CD8-positive, alpha-beta memory T cell (primary cell): ENCODE measurements at regions of chr7 and their contacts with region 1.

Region 1: GRCh38 chr7:139602143-139602722 is 78.7 kb downstream of the CLEC2L start:
- DNase-seq: peak in 1 of 5 donors; percentile 28
- H3K4me3 ChIP-seq: no peak overlapping the region
- H3K4me3 Mint-ChIP-seq: no peak overlapping the region
- H3K27ac ChIP-seq: no peak overlapping the region
- H3K27ac Mint-ChIP-seq: no peak overlapping the region
- H3K4me1 ChIP-seq: no peaks in the 10 kb centered on the region
- H3K4me1 Mint-ChIP-seq: no peaks in the 10 kb centered on the region
- H3K27me3 ChIP-seq: no peaks in the 10 kb centered on the region
- H3K27me3 Mint-ChIP-seq: peaks cover 0 to 2% of the 10 kb centered on the region in 2 donors

Region 2: GRCh38 chr7:139618482-139619366 is 16.5 kb after region 1 on chr7:
- CTCF ChIA-PET with region 1: interaction called, 12 read pairs
- POLR2A ChIA-PET with region 1: no interaction called
- DNase-seq: peak in 1 of 5 donors; percentile 43
- H3K4me3 ChIP-seq: no peak overlapping the region
- H3K4me3 Mint-ChIP-seq: no peak overlapping the region
- H3K27ac ChIP-seq: no peak overlapping the region
- H3K27ac Mint-ChIP-seq: peak overlapping the region in 2 of 8 donors; percentile 38 to 51
- H3K4me1 ChIP-seq: no peaks in the 10 kb centered on the region
- H3K4me1 Mint-ChIP-seq: peaks cover 0 to 2% (median 0%) of the 10 kb centered on the region in 3 donors
- H3K27me3 ChIP-seq: no peaks in the 10 kb centered on the region
- H3K27me3 Mint-ChIP-seq: no peaks in the 10 kb centered on the region

Region 3: GRCh38 chr7:139753081-139753692 is 151.0 kb after region 1 on chr7:
- CTCF ChIA-PET with region 1: no interaction called
- POLR2A ChIA-PET with region 1: no interaction called
- DNase-seq: no peak
- H3K4me3 ChIP-seq: no peak overlapping the region
- H3K4me3 Mint-ChIP-seq: no peak overlapping the region
- H3K27ac ChIP-seq: no peak overlapping the region
- H3K27ac Mint-ChIP-seq: no peak overlapping the region
- H3K4me1 ChIP-seq: peaks cover 20% of the 10 kb centered on the region
- H3K4me1 Mint-ChIP-seq: peaks cover 28 to 46% (median 44%) of the 10 kb centered on the region in 3 donors
- H3K27me3 ChIP-seq: no peaks in the 10 kb centered on the region
- H3K27me3 Mint-ChIP-seq: no peaks in the 10 kb centered on the region

Region 4: GRCh38 chr7:139767561-139767982 is 165.3 kb after region 1 on chr7:
- CTCF ChIA-PET with region 1: no interaction called
- POLR2A ChIA-PET with region 1: no interaction called
- DNase-seq: peak in 2 of 5 donors; percentile 36 to 54
- H3K4me3 ChIP-seq: peak overlapping the region; percentile 16
- H3K4me3 Mint-ChIP-seq: peak overlapping the region; percentile 3 to 69 (median 40)
- H3K27ac ChIP-seq: no peak overlapping the region
- H3K27ac Mint-ChIP-seq: peak overlapping the region; percentile 44 to 99 (median 85)
- H3K4me1 ChIP-seq: peaks cover 40% of the 10 kb centered on the region
- H3K4me1 Mint-ChIP-seq: peaks cover 53 to 83% (median 60%) of the 10 kb centered on the region in 3 donors
- H3K27me3 ChIP-seq: no peaks in the 10 kb centered on the region
- H3K27me3 Mint-ChIP-seq: no peaks in the 10 kb centered on the region